ENCODE measurements at regions of chr5 and their contacts with region 1.

Region 1: DNA sequence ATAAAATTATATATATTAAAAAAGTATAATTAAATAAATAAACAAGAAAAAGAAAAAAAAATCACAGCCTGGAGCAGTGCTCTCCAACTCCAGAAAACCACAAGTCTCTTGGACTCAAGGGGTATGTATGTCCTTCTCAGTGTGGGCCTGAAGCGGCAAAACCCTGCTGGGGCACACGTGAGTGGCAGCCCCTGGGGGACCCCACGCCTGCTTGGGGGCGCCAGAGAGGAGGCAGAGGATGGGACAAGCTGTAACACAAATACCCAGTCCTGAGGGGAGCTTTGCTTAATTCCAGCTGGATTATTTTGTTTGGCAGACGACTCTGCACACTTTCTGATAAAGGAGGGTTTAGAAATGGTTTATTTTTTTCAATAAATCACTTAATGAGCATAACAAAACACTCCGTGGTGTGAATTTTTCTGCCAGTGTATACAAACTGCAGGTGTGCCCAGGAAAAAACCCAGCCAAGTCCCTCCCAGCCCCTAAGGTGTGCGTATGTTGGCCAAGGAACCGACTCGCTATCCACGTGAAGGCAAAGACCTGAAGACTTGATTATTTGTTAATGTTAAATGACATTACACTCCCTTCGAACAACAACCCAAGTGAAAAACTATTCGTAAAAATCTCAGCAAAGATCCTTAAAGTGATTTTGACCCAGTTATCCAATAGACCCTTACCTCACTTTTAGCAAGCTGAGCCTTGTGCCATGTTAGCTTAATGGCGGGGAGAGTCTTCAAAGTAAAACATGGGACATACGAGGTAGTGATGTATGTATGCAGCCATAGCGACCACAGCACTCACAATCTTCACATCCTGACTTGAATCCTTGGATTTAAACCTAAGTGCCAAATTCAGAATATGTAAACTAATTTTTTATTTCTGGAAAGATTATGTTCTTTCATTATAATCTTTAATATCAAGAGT is 32.9 kb downstream of the ANKH start:
- DNase-seq: no peak
- ATAC-seq: no peak
- H3K4me3 ChIP-seq: no peak overlapping the region
- H3K27ac ChIP-seq: no peak overlapping the region
- H3K4me1 ChIP-seq: no peaks in the 10 kb centered on the region
- H3K27me3 ChIP-seq: no peaks in the 10 kb centered on the region
- CTCF ChIP-seq: no peak
- EP300 ChIP-seq: no peak
- POLR2A ChIP-seq: no peak
- RAD21 ChIP-seq: no peak

Region 2: DNA sequence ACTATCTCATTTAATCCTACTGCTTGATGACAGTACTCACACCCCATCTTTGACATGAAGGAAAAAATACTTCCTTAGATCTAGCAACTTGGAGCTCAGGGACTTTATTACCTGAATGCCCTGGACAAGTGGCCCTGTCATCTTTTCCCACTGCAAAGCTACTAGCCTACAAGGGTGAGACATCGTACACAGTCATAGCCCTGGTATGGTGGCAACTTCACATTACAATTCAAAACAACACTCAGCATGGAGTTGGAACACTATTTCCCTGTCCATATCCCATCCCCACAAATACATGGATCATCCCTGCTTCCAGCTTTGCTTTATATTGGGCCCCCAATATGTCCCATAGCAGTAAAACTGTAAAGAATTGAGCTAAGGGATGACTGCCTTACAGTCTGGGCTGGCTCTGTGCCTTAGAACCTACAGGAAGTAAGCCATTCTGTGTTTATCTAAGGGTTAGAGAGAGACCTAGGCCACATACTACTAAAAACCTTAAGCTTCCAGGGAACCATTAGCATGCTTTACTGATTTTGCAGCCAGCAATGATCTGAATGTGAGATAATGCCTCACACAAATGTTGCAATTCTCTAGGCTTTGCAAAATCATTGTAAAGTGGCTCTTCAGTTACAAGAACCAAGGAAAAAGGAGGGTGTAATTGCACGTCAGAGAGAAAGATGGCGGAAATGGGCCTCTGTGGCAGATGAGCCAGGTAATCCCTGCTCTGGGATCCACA is 118.3 kb before region 1 on chr5:
- CTCF ChIA-PET with region 1: no interaction called
- POLR2A ChIA-PET with region 1: interaction called, 11 read pairs
- RAD21 ChIA-PET with region 1: no interaction called
- SMC1A ChIA-PET with region 1: interaction called, 3 read pairs
- in situ Hi-C with region 1: no loop called
- intact Hi-C with region 1: no loop called
- DNase-seq: no peak
- ATAC-seq: no peak
- H3K4me3 ChIP-seq: no peak overlapping the region
- H3K27ac ChIP-seq: no peak overlapping the region
- H3K4me1 ChIP-seq: no peaks in the 10 kb centered on the region
- H3K27me3 ChIP-seq: no peaks in the 10 kb centered on the region
- CTCF ChIP-seq: no peak
- EP300 ChIP-seq: no peak
- POLR2A ChIP-seq: no peak
- RAD21 ChIP-seq: no peak